CD4-positive, alpha-beta memory T cell (primary cell): ENCODE measurements at regions of chr9 and their contacts with region 1.

Region 1: GRCh38 chr9:33290247-33291030 is at the start of gene NFX1:
- DNase-seq: peak; percentile 99 to 100 (median 100)
- H3K4me3 ChIP-seq: peak within 1 kb of the TSS; percentile 63 to 79
- H3K4me3 Mint-ChIP-seq: peak within 1 kb of the TSS; percentile 84 to 98 (median 96)
- H3K27ac ChIP-seq: peak within 1 kb of the TSS; percentile 98
- H3K27ac Mint-ChIP-seq: peak within 1 kb of the TSS; percentile 96 to 100 (median 100)
- H3K4me1 ChIP-seq: peaks cover 62% of the 10 kb centered on the region
- H3K4me1 Mint-ChIP-seq: peaks cover 32 to 64% (median 51%) of the 10 kb centered on the region in 4 donors
- H3K27me3 ChIP-seq: no peaks in the 10 kb centered on the region
- H3K27me3 Mint-ChIP-seq: no peaks in the 10 kb centered on the region
- total RNA-seq, gene NFX1: 63.7 to 64.7 TPM

Region 2: GRCh38 chr9:33167046-33167808 is 123.2 kb before region 1 on chr9 and contains the start of gene B4GALT1:
- CTCF ChIA-PET with region 1: no interaction called
- POLR2A ChIA-PET with region 1: interaction called, 15 read pairs
- intact Hi-C with region 1: no loop called
- DNase-seq: peak; percentile 90 to 94 (median 91)
- H3K4me3 ChIP-seq: peak within 1 kb of the TSS; percentile 56 to 99
- H3K4me3 Mint-ChIP-seq: peak within 1 kb of the TSS; percentile 90 to 95 (median 92)
- H3K27ac ChIP-seq: peak within 1 kb of the TSS; percentile 93
- H3K27ac Mint-ChIP-seq: peak within 1 kb of the TSS; percentile 97 to 99 (median 99)
- H3K4me1 ChIP-seq: peaks cover 48% of the 10 kb centered on the region
- H3K4me1 Mint-ChIP-seq: peaks cover 43 to 59% (median 55%) of the 10 kb centered on the region in 4 donors
- H3K27me3 ChIP-seq: no peaks in the 10 kb centered on the region
- H3K27me3 Mint-ChIP-seq: no peaks in the 10 kb centered on the region
- total RNA-seq, gene B4GALT1: 54.1 to 56.0 TPM

Region 3: GRCh38 chr9:33304362-33304761 is 13.9 kb after region 1 on chr9:
- CTCF ChIA-PET with region 1: interaction called, 10 read pairs
- POLR2A ChIA-PET with region 1: interaction called, 21 read pairs
- intact Hi-C with region 1: no loop called
- DNase-seq: no peak
- H3K4me3 ChIP-seq: no peak overlapping the region
- H3K4me3 Mint-ChIP-seq: no peak overlapping the region
- H3K27ac ChIP-seq: no peak overlapping the region
- H3K27ac Mint-ChIP-seq: no peak overlapping the region
- H3K4me1 ChIP-seq: peaks cover 9% of the 10 kb centered on the region
- H3K4me1 Mint-ChIP-seq: peaks cover 6 to 18% (median 11%) of the 10 kb centered on the region in 4 donors
- H3K27me3 ChIP-seq: no peaks in the 10 kb centered on the region
- H3K27me3 Mint-ChIP-seq: no peaks in the 10 kb centered on the region

Region 4: DNA sequence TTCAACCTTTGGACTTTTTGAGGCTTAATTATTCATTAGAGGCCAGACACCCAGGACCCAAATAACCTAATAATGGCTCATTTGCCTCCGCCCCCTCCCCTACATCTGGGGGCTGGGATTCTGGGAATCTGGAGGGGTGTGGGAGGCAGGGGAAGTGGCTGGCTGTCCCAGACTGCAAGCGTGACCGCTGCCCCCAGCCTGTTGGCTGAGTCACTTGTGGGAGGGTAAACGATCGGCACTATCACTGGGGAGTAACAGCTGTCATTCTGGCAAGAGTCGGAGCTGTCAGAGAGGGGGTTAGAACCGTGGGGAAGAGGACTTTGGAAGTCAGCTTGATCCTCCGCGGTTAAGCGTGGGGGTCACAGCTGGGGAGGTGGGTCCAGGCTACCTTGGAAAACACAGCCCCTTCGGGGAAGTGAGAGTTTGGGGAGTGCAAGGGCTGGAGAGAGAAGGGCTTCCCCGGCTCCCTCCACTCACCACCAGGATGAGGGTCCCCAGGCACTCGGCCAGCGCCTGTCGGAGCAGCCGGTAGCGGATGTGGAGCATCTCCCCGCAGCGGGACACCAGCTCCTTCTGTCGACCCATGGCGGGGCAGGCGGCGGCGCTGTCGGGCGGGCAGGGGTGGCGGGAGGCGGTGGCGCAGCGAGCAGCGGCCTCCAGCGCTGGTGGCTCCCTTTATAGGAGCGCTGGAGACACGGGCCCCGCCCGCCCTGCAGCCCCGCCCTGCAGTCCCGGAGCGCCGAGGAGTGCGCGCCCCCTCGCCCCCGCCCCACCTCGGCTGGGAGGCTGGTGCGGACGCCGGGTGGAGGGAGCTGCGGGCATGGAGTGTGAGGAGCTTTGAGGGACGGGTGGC is 156.7 kb after region 1 on chr9 and contains the start of gene AQP3:
- CTCF ChIA-PET with region 1: interaction called, 6 read pairs
- POLR2A ChIA-PET with region 1: interaction called, 18 read pairs
- intact Hi-C with region 1: loop called (anchors 5 kb)
- DNase-seq: peak; percentile 76 to 84 (median 76)
- H3K4me3 ChIP-seq: peak within 1 kb of the TSS; percentile 68 to 73
- H3K4me3 Mint-ChIP-seq: peak within 1 kb of the TSS; percentile 92 to 98 (median 94)
- H3K27ac ChIP-seq: peak within 1 kb of the TSS; percentile 75
- H3K27ac Mint-ChIP-seq: peak within 1 kb of the TSS; percentile 94 to 98 (median 96)
- H3K4me1 ChIP-seq: peaks cover 65% of the 10 kb centered on the region
- H3K4me1 Mint-ChIP-seq: peaks cover 31 to 74% (median 48%) of the 10 kb centered on the region in 4 donors
- H3K27me3 ChIP-seq: no peaks in the 10 kb centered on the region
- H3K27me3 Mint-ChIP-seq: no peaks in the 10 kb centered on the region
- total RNA-seq, gene AQP3: 172 TPM

Region 5: GRCh38 chr9:33816327-33817252 is 526.2 kb after region 1 on chr9 and contains the start of gene UBE2R2:
- CTCF ChIA-PET with region 1: no interaction called
- POLR2A ChIA-PET with region 1: interaction called, 6 read pairs
- intact Hi-C with region 1: loop called (anchors 2 kb)
- DNase-seq: peak; percentile 92 to 96 (median 94)
- H3K4me3 ChIP-seq: peak within 1 kb of the TSS; percentile 64 to 94
- H3K4me3 Mint-ChIP-seq: peak within 1 kb of the TSS; percentile 91 to 99 (median 96)
- H3K27ac ChIP-seq: peak within 1 kb of the TSS; percentile 89
- H3K27ac Mint-ChIP-seq: peak within 1 kb of the TSS; percentile 96 to 99 (median 98)
- H3K4me1 ChIP-seq: peaks cover 39% of the 10 kb centered on the region
- H3K4me1 Mint-ChIP-seq: peaks cover 30 to 59% (median 44%) of the 10 kb centered on the region in 4 donors
- H3K27me3 ChIP-seq: no peaks in the 10 kb centered on the region
- H3K27me3 Mint-ChIP-seq: no peaks in the 10 kb centered on the region
- total RNA-seq, gene UBE2R2: 31.0 to 31.4 TPM